Naive thymus-derived CD4-positive, alpha-beta T cell (primary cell): ENCODE measurements at regions of chr13 and their contacts with region 1.

Region 1: GRCh38 chr13:42654722-42655121 is 80.8 kb downstream of the TNFSF11 start:
- DNase-seq: no peak
- ATAC-seq: no peak
- H3K4me3 ChIP-seq: no peak overlapping the region
- H3K4me3 Mint-ChIP-seq: no peak overlapping the region
- H3K27ac ChIP-seq: no peak overlapping the region
- H3K27ac Mint-ChIP-seq: no peak overlapping the region
- H3K4me1 ChIP-seq: no peaks in the 10 kb centered on the region
- H3K4me1 Mint-ChIP-seq: no peaks in the 10 kb centered on the region
- H3K27me3 ChIP-seq: no peaks in the 10 kb centered on the region
- H3K27me3 Mint-ChIP-seq: peaks cover 60 to 71% (median 63%) of the 10 kb centered on the region in 5 donors

Region 2: GRCh38 chr13:42623916-42624315 is 30.8 kb before region 1 on chr13:
- CTCF ChIA-PET with region 1: no interaction called
- POLR2A ChIA-PET with region 1: no interaction called
- intact Hi-C with region 1: no loop called
- DNase-seq: no peak
- ATAC-seq: no peak
- H3K4me3 ChIP-seq: no peak overlapping the region
- H3K4me3 Mint-ChIP-seq: no peak overlapping the region
- H3K27ac ChIP-seq: no peak overlapping the region
- H3K27ac Mint-ChIP-seq: no peak overlapping the region
- H3K4me1 ChIP-seq: no peaks in the 10 kb centered on the region
- H3K4me1 Mint-ChIP-seq: no peaks in the 10 kb centered on the region
- H3K27me3 ChIP-seq: no peaks in the 10 kb centered on the region
- H3K27me3 Mint-ChIP-seq: peaks cover 8 to 27% (median 13%) of the 10 kb centered on the region in 5 donors

Region 3: DNA sequence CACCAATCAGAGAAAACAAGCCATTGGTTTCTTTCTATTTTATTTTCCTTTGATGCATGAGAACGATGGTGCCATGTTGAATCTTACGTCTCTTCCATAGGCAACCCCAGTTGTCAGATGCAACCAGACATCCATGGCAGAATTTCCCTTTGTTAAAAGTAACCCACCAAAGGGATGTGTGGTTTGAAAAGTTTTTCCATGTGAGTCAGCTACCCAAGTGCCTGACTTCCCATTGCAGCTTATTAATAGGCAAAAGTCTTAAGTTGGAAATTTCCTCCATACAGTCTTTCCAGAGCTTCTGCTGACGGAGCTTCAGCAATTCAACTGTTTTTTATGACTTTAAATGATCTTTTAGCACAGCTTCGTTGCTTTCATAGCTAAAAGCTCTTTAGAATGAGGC is 52.9 kb after region 1 on chr13:
- CTCF ChIA-PET with region 1: no interaction called
- POLR2A ChIA-PET with region 1: no interaction called
- intact Hi-C with region 1: loop called in 1 of 2 experiments (anchors 2 kb)
- DNase-seq: no peak
- ATAC-seq: no peak
- H3K4me3 ChIP-seq: no peak overlapping the region
- H3K4me3 Mint-ChIP-seq: no peak overlapping the region
- H3K27ac ChIP-seq: no peak overlapping the region
- H3K27ac Mint-ChIP-seq: no peak overlapping the region
- H3K4me1 ChIP-seq: no peaks in the 10 kb centered on the region
- H3K4me1 Mint-ChIP-seq: no peaks in the 10 kb centered on the region
- H3K27me3 ChIP-seq: no peaks in the 10 kb centered on the region
- H3K27me3 Mint-ChIP-seq: peaks cover 6 to 28% (median 14%) of the 10 kb centered on the region in 5 donors

Region 4: GRCh38 chr13:42740753-42741152 is 86.0 kb after region 1 on chr13:
- CTCF ChIA-PET with region 1: no interaction called
- POLR2A ChIA-PET with region 1: no interaction called
- intact Hi-C with region 1: no loop called
- DNase-seq: no peak
- ATAC-seq: no peak
- H3K4me3 ChIP-seq: no peak overlapping the region
- H3K4me3 Mint-ChIP-seq: no peak overlapping the region
- H3K27ac ChIP-seq: no peak overlapping the region
- H3K27ac Mint-ChIP-seq: no peak overlapping the region
- H3K4me1 ChIP-seq: no peaks in the 10 kb centered on the region
- H3K4me1 Mint-ChIP-seq: peaks cover 0 to 2% (median 0%) of the 10 kb centered on the region in 7 donors
- H3K27me3 ChIP-seq: no peaks in the 10 kb centered on the region
- H3K27me3 Mint-ChIP-seq: peaks cover 7 to 26% (median 11%) of the 10 kb centered on the region in 5 donors